ENCODE measurements at regions of chr5 and their contacts with region 1.

Region 1: GRCh38 chr5:170267431-170268152 is 30.0 kb downstream of the LCP2 start:
- DNase-seq: peak; percentile 85
- ATAC-seq: peak; percentile 95
- H3K4me3 ChIP-seq: no peak overlapping the region
- H3K4me3 Mint-ChIP-seq: peak overlapping the region; percentile 19
- H3K27ac ChIP-seq: no peak overlapping the region
- H3K27ac Mint-ChIP-seq: no peak overlapping the region
- H3K4me1 ChIP-seq: peaks cover 13 to 17% of the 10 kb centered on the region in 2 donors
- H3K4me1 Mint-ChIP-seq: peaks cover 19% of the 10 kb centered on the region
- H3K27me3 ChIP-seq: peaks cover 0 to 5% (median 0%) of the 10 kb centered on the region in 4 experiments
- H3K27me3 Mint-ChIP-seq: peaks cover 13% of the 10 kb centered on the region
- CTCF ChIP-seq: peak; percentile 90

Region 2: GRCh38 chr5:170225326-170226128 is 42.1 kb before region 1 on chr5:
- CTCF ChIA-PET with region 1: interaction called, 57 read pairs
- POLR2A ChIA-PET with region 1: no interaction called
- intact Hi-C with region 1: loop called (anchors 5 kb)
- DNase-seq: peak; percentile 69
- ATAC-seq: no peak
- H3K4me3 ChIP-seq: no peak overlapping the region
- H3K4me3 Mint-ChIP-seq: no peak overlapping the region
- H3K27ac ChIP-seq: no peak overlapping the region
- H3K27ac Mint-ChIP-seq: no peak overlapping the region
- H3K4me1 ChIP-seq: no peaks in the 10 kb centered on the region
- H3K4me1 Mint-ChIP-seq: peaks cover 1% of the 10 kb centered on the region
- H3K27me3 ChIP-seq: no peaks in the 10 kb centered on the region
- H3K27me3 Mint-ChIP-seq: peaks cover 10% of the 10 kb centered on the region
- CTCF ChIP-seq: peak; percentile 81

Region 3: GRCh38 chr5:170293273-170293672 is 25.7 kb after region 1 on chr5:
- CTCF ChIA-PET with region 1: interaction called, 99 read pairs
- POLR2A ChIA-PET with region 1: no interaction called
- intact Hi-C with region 1: no loop called
- DNase-seq: peak; percentile 91
- ATAC-seq: peak; percentile 92
- H3K4me3 ChIP-seq: peak overlapping the region in 2 of 5 experiments; percentile 19 to 34
- H3K4me3 Mint-ChIP-seq: peak overlapping the region; percentile 30
- H3K27ac ChIP-seq: no peak overlapping the region
- H3K27ac Mint-ChIP-seq: peak overlapping the region; percentile 60
- H3K4me1 ChIP-seq: peaks cover 59 to 70% of the 10 kb centered on the region in 2 donors
- H3K4me1 Mint-ChIP-seq: peaks cover 63% of the 10 kb centered on the region
- H3K27me3 ChIP-seq: peaks cover 0 to 45% (median 19%) of the 10 kb centered on the region in 4 experiments
- H3K27me3 Mint-ChIP-seq: peaks cover 36% of the 10 kb centered on the region
- CTCF ChIP-seq: no peak

Region 4: GRCh38 chr5:170333161-170333910 is 65.7 kb after region 1 on chr5:
- CTCF ChIA-PET with region 1: interaction called, 218 read pairs
- POLR2A ChIA-PET with region 1: interaction called, 4 read pairs
- intact Hi-C with region 1: loop called (anchors 2 kb)
- DNase-seq: peak; percentile 30
- ATAC-seq: peak; percentile 10
- H3K4me3 ChIP-seq: no peak overlapping the region
- H3K4me3 Mint-ChIP-seq: peak overlapping the region; percentile 23
- H3K27ac ChIP-seq: peak overlapping the region in 1 of 2 donors; percentile 78
- H3K27ac Mint-ChIP-seq: no peak overlapping the region
- H3K4me1 ChIP-seq: peaks cover 53 to 59% of the 10 kb centered on the region in 2 donors
- H3K4me1 Mint-ChIP-seq: peaks cover 35% of the 10 kb centered on the region
- H3K27me3 ChIP-seq: no peaks in the 10 kb centered on the region
- H3K27me3 Mint-ChIP-seq: no peaks in the 10 kb centered on the region
- CTCF ChIP-seq: no peak

Region 5: GRCh38 chr5:170348137-170348633 is 80.6 kb after region 1 on chr5:
- CTCF ChIA-PET with region 1: interaction called, 218 read pairs
- POLR2A ChIA-PET with region 1: interaction called, 3 read pairs
- intact Hi-C with region 1: no loop called
- DNase-seq: no peak
- ATAC-seq: no peak
- H3K4me3 ChIP-seq: no peak overlapping the region
- H3K4me3 Mint-ChIP-seq: no peak overlapping the region
- H3K27ac ChIP-seq: no peak overlapping the region
- H3K27ac Mint-ChIP-seq: no peak overlapping the region
- H3K4me1 ChIP-seq: peaks cover under 1 to 2% of the 10 kb centered on the region in 2 donors
- H3K4me1 Mint-ChIP-seq: peaks cover 3% of the 10 kb centered on the region
- H3K27me3 ChIP-seq: peaks cover 0 to 21% (median 14%) of the 10 kb centered on the region in 4 experiments
- H3K27me3 Mint-ChIP-seq: peaks cover 62% of the 10 kb centered on the region
- CTCF ChIP-seq: no peak

Measured in B cell (primary cell).